ENCODE measurements at regions of chr12 and their contacts with region 1.

Region 1: GRCh38 chr12:49088190-49088931 is 6.2 kb downstream of the DHH start:
- DNase-seq: peak; percentile 89 to 96
- ATAC-seq: peak; percentile 82 to 90
- H3K4me3 ChIP-seq: no peak overlapping the region
- H3K27ac ChIP-seq: peak overlapping the region in 1 of 2 experiments; percentile 64; a peak in 3 of 6 replicates
- H3K4me1 ChIP-seq: peaks cover 17% of the 10 kb centered on the region; the same call in 2 of the 3 replicates
- CTCF ChIP-seq: peak; percentile 92
- EP300 ChIP-seq: no peak
- POLR2A ChIP-seq: no peak
- RAD21 ChIP-seq: peak; percentile 69 to 74

Region 2: GRCh38 chr12:49043856-49044258 is 44.5 kb before region 1 on chr12:
- CTCF ChIA-PET with region 1: interaction called, 13 read pairs
- POLR2A ChIA-PET with region 1: no interaction called
- DNase-seq: peak; percentile 73 to 74
- ATAC-seq: peak; percentile 62 to 86; a peak in 5 of 6 replicates
- H3K4me3 ChIP-seq: no peak overlapping the region
- H3K27ac ChIP-seq: no peak overlapping the region
- H3K4me1 ChIP-seq: no peaks in the 10 kb centered on the region
- CTCF ChIP-seq: peak; percentile 55
- EP300 ChIP-seq: no peak
- POLR2A ChIP-seq: no peak
- RAD21 ChIP-seq: no peak

Region 3: DNA sequence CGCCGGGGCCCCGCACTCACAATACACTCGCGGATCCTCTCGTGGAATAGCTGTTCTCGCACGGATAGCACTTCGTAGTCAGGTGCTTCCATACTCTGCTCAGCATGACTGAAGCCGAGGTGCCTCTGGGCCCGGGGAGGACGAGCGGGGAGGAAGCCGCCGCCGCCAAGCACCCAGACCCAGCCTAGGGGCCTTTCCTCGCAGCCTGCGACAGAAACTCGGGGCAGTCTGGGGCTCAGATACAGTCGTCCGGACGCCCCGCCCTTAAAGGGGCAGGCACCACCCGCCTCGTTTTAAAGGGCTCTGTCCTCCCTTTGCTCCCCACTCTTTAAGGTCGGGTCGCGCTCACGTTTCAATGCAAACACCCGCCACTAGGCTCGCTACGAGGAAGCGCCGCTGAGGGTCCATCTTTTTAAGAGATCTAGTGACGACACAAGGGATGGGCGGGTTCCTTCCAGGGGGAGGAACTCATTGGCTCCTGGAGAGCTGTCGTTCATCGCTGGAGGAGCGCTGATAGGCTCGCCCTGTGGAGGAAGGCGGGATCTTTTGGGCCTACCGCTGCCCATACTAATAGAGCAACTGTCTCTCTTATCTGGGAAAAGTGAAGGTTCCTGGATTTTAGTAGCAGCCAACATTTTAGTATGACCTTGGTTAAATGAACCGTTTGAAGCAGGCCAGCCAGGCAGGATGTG is 22.2 kb after region 1 on chr12 and contains the start of gene LMBR1L:
- CTCF ChIA-PET with region 1: interaction called, 159 read pairs
- POLR2A ChIA-PET with region 1: interaction called, 9 read pairs
- DNase-seq: peak; percentile 99 to 100
- ATAC-seq: peak; percentile 98 to 99
- H3K4me3 ChIP-seq: peak within 1 kb of the TSS; percentile 89
- H3K27ac ChIP-seq: peak within 1 kb of the TSS; percentile 79 to 93
- H3K4me1 ChIP-seq: peaks cover 15% of the 10 kb centered on the region
- CTCF ChIP-seq: no peak
- EP300 ChIP-seq: no peak
- POLR2A ChIP-seq: peak; percentile 65
- RAD21 ChIP-seq: no peak
- polyA plus RNA-seq, gene LMBR1L: 25.1 and 35.7 TPM in 2 replicates

Region 4: DNA sequence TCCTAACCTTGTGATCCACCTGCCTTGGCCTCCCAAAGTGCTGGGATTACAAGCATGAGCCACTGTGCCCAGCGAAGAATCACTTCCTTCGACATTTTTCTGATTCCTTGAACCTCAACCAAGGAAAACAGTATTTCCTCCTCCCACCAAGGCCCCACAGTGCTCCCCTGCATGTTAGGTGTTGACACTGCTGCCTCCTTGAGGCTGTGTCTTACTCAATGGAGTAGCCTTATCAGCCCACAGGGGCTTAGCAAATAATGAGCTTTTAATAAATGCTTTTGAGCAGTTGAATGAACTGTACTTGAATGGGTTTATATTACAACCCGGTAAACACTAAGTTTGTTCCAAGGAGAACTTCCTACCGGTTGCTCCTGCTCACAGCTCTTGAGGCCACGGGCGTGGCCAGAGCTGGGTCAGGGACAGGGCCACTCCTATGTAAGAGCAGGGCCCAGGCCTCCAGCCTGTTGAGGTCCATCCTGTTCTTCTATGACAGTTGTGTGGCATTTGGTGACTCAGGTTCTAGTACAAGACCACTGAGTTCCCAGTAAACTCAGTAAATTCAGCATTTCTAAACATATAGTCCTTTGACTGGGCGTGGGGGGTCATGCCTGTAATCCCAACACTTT is 137.3 kb after region 1 on chr12:
- CTCF ChIA-PET with region 1: interaction called, 15 read pairs
- POLR2A ChIA-PET with region 1: no interaction called
- DNase-seq: peak in 1 of 2 experiments; percentile 44
- ATAC-seq: peak in 1 of 2 experiments; percentile 67; a peak in 3 of 6 replicates
- H3K4me3 ChIP-seq: no peak overlapping the region
- H3K27ac ChIP-seq: 0 out of 6 replicates have a peak overlapping the region, but pooled peaks of 1 of the 2 experiments have one; percentile 11
- H3K4me1 ChIP-seq: no peaks in the 10 kb centered on the region
- CTCF ChIP-seq: no peak
- EP300 ChIP-seq: no peak
- POLR2A ChIP-seq: no peak
- RAD21 ChIP-seq: no peak

Region 5: GRCh38 chr12:49244176-49244575 is 155.8 kb after region 1 on chr12:
- CTCF ChIA-PET with region 1: interaction called, 16 read pairs
- POLR2A ChIA-PET with region 1: no interaction called
- DNase-seq: no peak
- ATAC-seq: no peak
- H3K4me3 ChIP-seq: no peak overlapping the region
- H3K27ac ChIP-seq: no peak overlapping the region
- H3K4me1 ChIP-seq: no peaks in the 10 kb centered on the region
- CTCF ChIP-seq: no peak
- EP300 ChIP-seq: no peak
- POLR2A ChIP-seq: no peak
- RAD21 ChIP-seq: no peak

Measured in A549 (cell line).